ENCODE measurements at regions of chr2 and their contacts with region 1.

Region 1: DNA sequence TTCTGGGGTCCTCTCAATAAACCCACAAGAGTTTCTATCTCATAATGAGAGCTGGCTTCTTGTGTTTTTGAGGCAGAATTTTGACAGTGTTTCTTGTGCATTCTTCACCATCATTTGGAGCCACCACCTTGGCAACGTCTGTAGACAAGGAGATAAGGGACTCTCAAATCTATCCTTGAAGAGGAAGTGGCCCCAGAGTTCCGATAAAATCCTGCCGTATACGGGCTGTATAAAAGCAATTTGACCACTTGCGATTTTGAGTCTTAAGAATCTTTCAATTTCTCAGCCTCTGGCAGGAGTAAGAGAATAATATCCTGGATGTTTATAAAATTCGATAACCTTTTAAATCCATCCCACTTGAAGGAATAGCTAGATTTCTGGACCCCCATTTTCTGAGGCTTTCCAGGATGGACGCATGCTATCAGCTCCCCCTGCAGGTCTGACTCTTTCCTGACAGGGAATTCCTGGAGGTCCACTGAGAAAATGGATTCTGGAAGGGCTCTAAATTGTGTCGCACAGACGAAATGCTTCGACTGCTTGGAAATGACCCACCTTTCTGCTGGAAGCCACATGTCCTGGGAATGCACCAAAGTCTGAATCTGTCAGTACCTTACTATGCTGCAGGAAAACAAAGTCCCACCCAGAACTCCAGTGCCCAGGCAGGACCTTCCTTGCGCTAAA is 54.1 kb downstream of the E2F6 start:
- DNase-seq: no peak
- H3K4me3 ChIP-seq: peak overlapping the region; percentile 44
- H3K27ac ChIP-seq: no peak overlapping the region
- H3K27me3 ChIP-seq: no peaks in the 10 kb centered on the region
- CTCF ChIP-seq: peak; percentile 90

Region 2: GRCh38 chr2:11187083-11187619 is 224.8 kb before region 1 on chr2:
- CTCF ChIA-PET with region 1: interaction called, 12 read pairs
- POLR2A ChIA-PET with region 1: no interaction called
- DNase-seq: peak; percentile 27
- H3K4me3 ChIP-seq: no peak overlapping the region
- H3K27ac ChIP-seq: no peak overlapping the region
- H3K27me3 ChIP-seq: no peaks in the 10 kb centered on the region
- CTCF ChIP-seq: no peak

Region 3: DNA sequence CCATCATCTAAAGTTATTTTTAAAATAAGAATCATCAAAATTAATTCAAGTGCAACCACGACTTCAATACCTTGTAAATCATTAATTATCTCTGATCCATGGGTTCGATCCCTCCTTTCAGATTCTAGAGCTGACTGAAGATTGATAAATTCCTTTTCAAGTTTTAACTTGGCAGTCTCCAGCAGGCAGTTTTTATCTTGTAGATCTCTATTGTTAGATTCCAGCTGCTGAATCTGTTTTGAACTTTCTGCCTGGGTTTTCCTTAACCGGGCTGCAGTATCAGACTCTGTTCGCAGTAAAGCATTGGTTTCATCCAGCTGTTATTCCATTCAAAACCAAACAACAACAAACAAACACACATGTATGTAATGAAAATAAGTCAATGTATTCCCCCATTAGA is 197.1 kb before region 1 on chr2:
- CTCF ChIA-PET with region 1: interaction called, 23 read pairs
- POLR2A ChIA-PET with region 1: no interaction called
- DNase-seq: no peak
- H3K4me3 ChIP-seq: no peak overlapping the region
- H3K27ac ChIP-seq: no peak overlapping the region
- H3K27me3 ChIP-seq: no peaks in the 10 kb centered on the region
- CTCF ChIP-seq: no peak

Region 4: DNA sequence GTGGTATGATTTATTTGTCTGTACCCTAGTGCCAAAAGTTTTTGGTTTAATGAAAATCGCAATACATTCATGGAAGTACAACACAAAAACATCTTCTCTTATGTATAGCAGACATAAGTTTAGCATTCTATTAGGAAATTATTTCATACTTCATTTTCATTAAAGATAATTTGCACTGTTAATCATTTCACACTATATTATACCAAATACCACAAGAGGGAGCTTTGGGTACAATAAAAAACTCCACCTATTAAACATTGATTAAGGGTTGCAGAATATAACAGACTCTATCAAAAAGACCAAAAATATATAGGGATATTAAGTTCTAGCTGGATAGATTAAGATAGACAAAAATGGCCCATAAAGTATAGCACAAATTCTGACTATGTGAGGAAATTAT is 177.6 kb before region 1 on chr2:
- CTCF ChIA-PET with region 1: interaction called, 62 read pairs
- POLR2A ChIA-PET with region 1: no interaction called
- DNase-seq: no peak
- H3K4me3 ChIP-seq: no peak overlapping the region
- H3K27ac ChIP-seq: no peak overlapping the region
- H3K27me3 ChIP-seq: no peaks in the 10 kb centered on the region
- CTCF ChIP-seq: peak; percentile 51

Region 5: GRCh38 chr2:11254100-11254536 is 157.8 kb before region 1 on chr2:
- CTCF ChIA-PET with region 1: interaction called, 10 read pairs
- POLR2A ChIA-PET with region 1: no interaction called
- DNase-seq: no peak
- H3K4me3 ChIP-seq: no peak overlapping the region
- H3K27ac ChIP-seq: no peak overlapping the region
- H3K27me3 ChIP-seq: no peaks in the 10 kb centered on the region
- CTCF ChIP-seq: no peak

Region 6: GRCh38 chr2:12050396-12050795 is 638.5 kb after region 1 on chr2:
- CTCF ChIA-PET with region 1: no interaction called
- POLR2A ChIA-PET with region 1: no interaction called
- DNase-seq: peak; percentile 65
- H3K4me3 ChIP-seq: no peak overlapping the region
- H3K27ac ChIP-seq: no peak overlapping the region
- H3K27me3 ChIP-seq: no peaks in the 10 kb centered on the region
- CTCF ChIP-seq: peak; percentile 33; the same call in 1 of the 2 replicates